Activated CD4-positive, alpha-beta memory T cell treated with anti-CD3 and anti-CD28 coated beads, Interleukin-2, amount 10 ng/mL, durations not matched to agents 7 days and 5 days (primary cell): ENCODE measurements at regions of chr1 and their contacts with region 1.

Region 1: GRCh38 chr1:157580179-157580827 is 17.6 kb downstream of the FCRL4 start:
- DNase-seq: no peak
- H3K4me3 Mint-ChIP-seq: no peak overlapping the region
- H3K27ac Mint-ChIP-seq: no peak overlapping the region
- H3K4me1 Mint-ChIP-seq: no peaks in the 10 kb centered on the region
- H3K27me3 Mint-ChIP-seq: peaks cover 15% of the 10 kb centered on the region

Region 2: DNA sequence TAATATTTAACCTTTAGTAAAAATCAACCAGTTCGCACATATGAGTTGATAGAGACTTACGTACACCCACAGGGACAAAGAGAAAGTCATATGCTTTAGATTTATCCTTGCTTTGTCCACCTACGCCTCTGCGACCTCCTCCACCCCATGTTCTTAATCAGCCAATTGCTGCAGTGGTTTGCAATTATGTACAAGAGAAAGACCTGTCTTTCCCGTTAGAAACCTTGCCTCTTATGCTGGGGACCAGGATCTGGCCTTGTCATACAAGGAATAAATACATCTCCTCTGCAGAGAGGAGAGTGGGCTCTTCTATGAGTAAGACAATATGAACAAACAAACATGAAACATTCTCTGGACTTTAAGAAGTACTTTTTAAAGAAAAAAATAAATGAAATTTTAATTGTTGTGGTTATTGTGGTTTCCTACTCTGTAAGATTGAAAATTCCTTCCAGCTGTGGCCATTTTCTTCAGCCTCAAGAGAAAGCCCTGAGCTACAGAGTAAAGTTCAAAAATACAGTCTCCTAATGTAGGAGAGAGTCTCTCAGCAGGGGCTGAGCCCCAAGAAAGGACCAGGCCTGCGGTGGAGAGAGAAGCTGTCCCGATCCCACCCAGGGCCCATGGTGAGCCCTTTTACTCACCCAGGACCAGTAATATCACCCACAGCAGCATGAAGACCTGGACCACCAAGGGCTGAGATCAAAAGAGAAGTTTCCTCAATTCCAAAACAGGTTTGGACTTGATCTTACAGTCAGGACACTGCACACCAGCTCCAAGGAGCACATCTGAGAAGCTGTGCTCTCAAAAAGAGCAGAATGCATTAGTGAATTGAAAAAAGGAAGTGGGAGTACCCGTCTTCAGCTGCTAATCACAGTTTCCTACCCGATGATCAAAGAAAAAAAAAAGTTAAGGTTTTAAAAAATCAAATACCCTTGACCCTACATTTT is 28.3 kb before region 1 on chr1 and contains the start of gene FCRL5:
- CTCF ChIA-PET with region 1: no interaction called
- POLR2A ChIA-PET with region 1: no interaction called
- DNase-seq: no peak
- H3K4me3 Mint-ChIP-seq: no peak within 1 kb of the TSS
- H3K27ac Mint-ChIP-seq: no peak within 1 kb of the TSS
- H3K4me1 Mint-ChIP-seq: no peaks in the 10 kb centered on the region
- H3K27me3 Mint-ChIP-seq: peaks cover 9% of the 10 kb centered on the region
- total RNA-seq, gene FCRL5: not detected

Region 3: GRCh38 chr1:157691285-157691920 is 111.1 kb after region 1 on chr1:
- CTCF ChIA-PET with region 1: interaction called, 14 read pairs
- POLR2A ChIA-PET with region 1: no interaction called
- DNase-seq: no peak
- H3K4me3 Mint-ChIP-seq: no peak overlapping the region
- H3K27ac Mint-ChIP-seq: no peak overlapping the region
- H3K4me1 Mint-ChIP-seq: no peaks in the 10 kb centered on the region
- H3K27me3 Mint-ChIP-seq: no peaks in the 10 kb centered on the region

Region 4: DNA sequence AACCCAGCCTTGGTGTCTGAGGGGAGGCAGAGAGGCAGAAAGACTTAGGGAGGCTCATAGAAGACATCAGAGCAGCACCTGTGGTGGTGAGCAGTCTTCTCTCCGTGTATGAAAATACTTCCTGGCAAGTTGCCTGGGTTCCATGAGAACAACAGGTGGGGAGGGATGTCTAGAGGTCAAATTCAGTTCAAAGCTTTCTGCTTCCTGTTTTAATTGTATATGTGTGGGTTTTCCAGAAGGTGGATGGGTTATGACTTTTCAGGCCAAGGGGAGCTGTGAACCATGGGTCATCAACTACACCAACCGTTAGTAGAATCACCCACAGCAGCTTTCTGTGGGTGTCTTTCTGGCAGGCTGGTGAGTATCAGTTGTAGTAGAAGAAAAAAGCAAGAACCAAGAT is 200.7 kb after region 1 on chr1:
- CTCF ChIA-PET with region 1: no interaction called
- POLR2A ChIA-PET with region 1: no interaction called
- DNase-seq: no peak
- H3K4me3 Mint-ChIP-seq: no peak overlapping the region
- H3K27ac Mint-ChIP-seq: no peak overlapping the region
- H3K4me1 Mint-ChIP-seq: peaks cover 2% of the 10 kb centered on the region
- H3K27me3 Mint-ChIP-seq: no peaks in the 10 kb centered on the region